Mammary epithelial cell (primary cell): ENCODE measurements at regions of chr3 and their contacts with region 1.

Region 1: GRCh38 chr3:12663936-12664908 is at the start of gene RAF1:
- DNase-seq: peak; percentile 97
- H3K4me3 ChIP-seq: peak within 1 kb of the TSS; percentile 77 to 89 (median 79)
- H3K27ac ChIP-seq: peak within 1 kb of the TSS; percentile 84
- H3K4me1 ChIP-seq: peaks cover 13% of the 10 kb centered on the region
- H3K27me3 ChIP-seq: no peaks in the 10 kb centered on the region
- CTCF ChIP-seq: no peak
- total RNA-seq, gene RAF1: 68.1 to 72.8 TPM

Region 2: GRCh38 chr3:12536423-12536822 is 127.8 kb before region 1 on chr3:
- CTCF ChIA-PET with region 1: no interaction called
- dilution Hi-C with region 1: no loop called
- in situ Hi-C with region 1: no loop called
- intact Hi-C with region 1: no loop called
- DNase-seq: no peak
- H3K4me3 ChIP-seq: no peak overlapping the region
- H3K27ac ChIP-seq: no peak overlapping the region
- H3K4me1 ChIP-seq: no peaks in the 10 kb centered on the region
- H3K27me3 ChIP-seq: no peaks in the 10 kb centered on the region
- CTCF ChIP-seq: no peak

Region 3: DNA sequence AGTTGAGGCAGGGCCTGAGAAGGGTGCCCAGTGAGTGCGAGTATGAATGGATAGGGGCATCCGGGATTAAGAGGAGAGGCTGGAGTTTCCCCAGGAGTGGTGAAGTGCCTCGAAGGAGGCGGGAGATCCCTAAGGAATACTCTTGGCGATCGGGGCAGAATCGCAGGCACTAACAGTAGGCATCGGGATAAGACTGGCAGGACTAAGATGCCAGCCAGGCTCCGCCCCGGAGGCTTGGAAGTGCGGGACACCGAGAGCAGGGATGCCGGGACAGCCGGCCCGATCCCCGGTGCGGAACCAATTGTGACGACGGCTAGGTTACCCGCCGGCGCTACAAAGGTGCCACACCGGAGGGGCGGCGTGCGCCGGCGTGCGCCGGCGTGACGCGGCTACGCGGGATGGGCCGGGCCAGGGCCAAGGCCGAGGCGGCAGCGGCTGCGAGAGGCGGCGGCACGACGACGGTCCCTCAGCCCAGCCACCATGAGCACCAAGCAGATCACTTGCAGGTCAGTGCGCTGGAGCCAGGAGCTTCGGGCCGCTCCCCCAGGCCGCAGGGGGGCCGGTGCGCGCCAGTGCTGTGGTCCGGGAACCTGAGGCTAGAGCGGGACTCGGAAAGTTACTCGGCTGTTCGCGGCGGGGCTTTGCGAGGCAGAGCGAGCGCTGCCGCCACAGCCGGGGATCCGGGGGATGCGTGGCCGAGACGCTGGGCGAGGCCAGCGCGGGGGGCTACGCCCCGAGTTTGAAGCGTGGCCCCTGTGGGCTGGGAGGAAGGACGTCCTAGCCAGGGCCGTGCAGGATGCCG is 107.3 kb before region 1 on chr3 and contains the start of gene MKRN2:
- CTCF ChIA-PET with region 1: no interaction called
- dilution Hi-C with region 1: no loop called
- in situ Hi-C with region 1: no loop called
- intact Hi-C with region 1: loop called (anchors 2 kb)
- DNase-seq: peak; percentile 89
- H3K4me3 ChIP-seq: peak within 1 kb of the TSS; percentile 95 to 97 (median 96)
- H3K27ac ChIP-seq: peak within 1 kb of the TSS; percentile 87
- H3K4me1 ChIP-seq: peaks cover 19% of the 10 kb centered on the region
- H3K27me3 ChIP-seq: no peaks in the 10 kb centered on the region
- CTCF ChIP-seq: no peak
- total RNA-seq, gene MKRN2: 26.3 to 35.0 TPM

Region 4: DNA sequence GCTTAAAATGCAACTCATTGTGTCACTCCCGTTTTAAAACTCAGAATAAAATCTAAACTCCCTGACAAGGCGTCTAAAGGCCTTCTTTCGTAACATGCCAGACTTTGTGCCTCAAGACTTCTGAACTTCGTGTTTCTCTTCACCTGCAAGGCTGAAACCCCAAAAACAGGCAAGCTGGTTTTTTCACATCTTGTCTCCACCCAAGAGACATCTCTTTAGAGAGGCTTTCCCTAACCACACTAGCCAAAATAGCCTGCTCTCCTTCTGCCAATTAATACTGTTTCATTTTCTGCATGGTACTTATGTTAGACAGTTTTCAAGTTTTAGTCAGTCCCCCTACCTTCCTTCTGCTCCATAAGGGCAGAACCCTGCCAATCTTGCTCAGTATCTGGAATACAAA is 41.9 kb before region 1 on chr3:
- CTCF ChIA-PET with region 1: no interaction called
- dilution Hi-C with region 1: no loop called
- in situ Hi-C with region 1: no loop called
- intact Hi-C with region 1: loop called (anchors 5 kb)
- DNase-seq: no peak
- H3K4me3 ChIP-seq: no peak overlapping the region
- H3K27ac ChIP-seq: no peak overlapping the region
- H3K4me1 ChIP-seq: no peaks in the 10 kb centered on the region
- H3K27me3 ChIP-seq: no peaks in the 10 kb centered on the region
- CTCF ChIP-seq: no peak

Region 5: DNA sequence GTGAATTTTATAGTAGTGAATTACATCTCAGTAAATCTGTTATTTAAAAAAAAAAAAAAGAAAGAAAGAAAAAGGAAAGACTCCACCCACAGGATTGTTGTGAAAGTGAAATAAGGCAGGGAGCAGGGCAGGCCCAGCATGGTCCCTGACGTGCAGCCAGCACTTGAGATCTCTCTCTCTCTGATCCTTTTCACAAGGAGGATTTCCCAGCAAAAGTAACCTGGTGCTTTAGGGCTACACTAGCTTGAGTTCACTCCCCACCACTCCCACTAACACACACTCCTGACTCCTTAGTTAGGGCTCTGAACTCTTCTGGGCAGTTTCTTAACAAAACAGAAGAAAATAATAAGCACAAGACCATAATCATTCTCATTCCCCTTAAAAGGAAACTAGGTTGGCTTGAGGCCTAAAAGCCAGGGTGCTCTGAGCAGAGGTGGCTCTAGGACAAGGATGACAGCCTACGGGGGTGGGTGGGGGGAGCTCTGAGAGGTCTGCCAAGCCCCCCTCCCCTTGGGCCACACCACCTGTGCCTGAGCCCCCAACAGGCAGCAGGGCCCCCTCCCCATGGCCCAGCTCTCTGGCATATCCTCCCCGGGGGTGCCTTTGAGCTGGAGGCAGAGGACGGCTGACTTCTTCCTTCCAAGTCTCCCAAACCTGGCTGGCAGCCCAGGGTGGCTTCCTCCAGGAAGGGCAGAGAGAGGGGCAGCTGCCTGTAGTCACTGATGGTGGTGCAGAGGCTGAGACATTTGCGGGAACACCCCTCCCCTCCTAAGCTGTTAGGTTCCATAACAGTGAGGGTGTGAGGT is 94.0 kb after region 1 on chr3:
- CTCF ChIA-PET with region 1: no interaction called
- dilution Hi-C with region 1: no loop called
- in situ Hi-C with region 1: no loop called
- intact Hi-C with region 1: loop called (anchors 2 kb)
- DNase-seq: peak; percentile 46
- H3K4me3 ChIP-seq: peak overlapping the region; percentile 58 to 69 (median 65)
- H3K27ac ChIP-seq: peak overlapping the region; percentile 68
- H3K4me1 ChIP-seq: peaks cover 68% of the 10 kb centered on the region
- H3K27me3 ChIP-seq: no peaks in the 10 kb centered on the region
- CTCF ChIP-seq: no peak